ENCODE measurements at regions of chr17 and their contacts with region 1.

Region 1: DNA sequence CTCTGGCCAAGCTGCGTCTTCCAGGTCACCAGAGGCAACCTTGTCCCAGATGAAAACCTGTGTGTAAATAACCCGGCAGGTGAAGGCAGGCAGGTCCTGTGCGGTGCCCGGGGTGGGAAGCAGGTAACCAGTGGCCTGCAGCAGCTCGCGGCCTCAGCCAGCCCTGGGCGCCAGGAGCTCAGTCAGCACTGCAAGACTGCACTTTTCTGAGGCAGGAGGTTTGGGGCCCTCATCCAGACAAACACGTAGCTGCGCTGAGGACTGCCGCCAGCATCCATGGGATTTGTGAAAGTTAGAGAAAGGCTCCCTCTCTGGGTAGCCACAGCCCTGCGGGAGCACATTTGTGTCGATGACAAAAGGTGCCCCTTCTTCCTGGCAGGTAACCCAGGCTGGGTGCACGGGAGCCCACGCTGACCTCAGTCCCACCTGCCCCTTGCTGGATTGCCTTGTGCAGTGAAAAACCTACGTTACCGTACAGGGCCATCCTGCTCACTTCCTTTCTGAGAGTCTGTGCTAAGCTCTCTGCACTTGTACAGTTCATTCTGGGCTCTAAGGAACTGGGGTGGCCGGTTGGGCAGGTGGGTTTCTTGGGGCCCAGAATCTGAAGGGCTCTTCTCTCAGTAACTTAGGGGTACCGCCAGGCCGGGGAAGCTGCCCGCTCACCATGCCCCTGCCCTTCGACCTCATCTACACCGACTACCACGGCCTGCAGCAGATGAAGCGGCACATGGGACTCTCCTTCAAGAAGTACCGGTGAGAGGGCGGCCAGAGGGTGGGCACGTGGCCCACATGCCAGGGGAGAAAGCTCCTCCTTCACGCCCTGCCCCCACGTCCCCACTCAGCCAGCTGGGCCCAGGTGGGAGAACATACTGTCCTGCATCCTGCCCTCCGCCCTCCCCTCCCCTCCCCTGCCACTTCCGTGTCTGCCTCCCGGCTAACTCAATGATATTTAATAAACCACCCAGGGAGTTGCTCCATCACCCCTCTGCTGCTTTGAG is 56.4 kb downstream of the MGAT5B start:
- DNase-seq: no peak
- ATAC-seq: no peak
- H3K4me3 ChIP-seq: no peak overlapping the region
- H3K4me3 Mint-ChIP-seq: no peak overlapping the region
- H3K27ac ChIP-seq: no peak overlapping the region
- H3K27ac Mint-ChIP-seq: no peak overlapping the region
- H3K4me1 ChIP-seq: peaks cover 6% of the 10 kb centered on the region
- H3K4me1 Mint-ChIP-seq: no peaks in the 10 kb centered on the region
- H3K27me3 ChIP-seq: no peaks in the 10 kb centered on the region
- H3K27me3 Mint-ChIP-seq: no peaks in the 10 kb centered on the region
- CTCF ChIP-seq: no peak

Region 2: DNA sequence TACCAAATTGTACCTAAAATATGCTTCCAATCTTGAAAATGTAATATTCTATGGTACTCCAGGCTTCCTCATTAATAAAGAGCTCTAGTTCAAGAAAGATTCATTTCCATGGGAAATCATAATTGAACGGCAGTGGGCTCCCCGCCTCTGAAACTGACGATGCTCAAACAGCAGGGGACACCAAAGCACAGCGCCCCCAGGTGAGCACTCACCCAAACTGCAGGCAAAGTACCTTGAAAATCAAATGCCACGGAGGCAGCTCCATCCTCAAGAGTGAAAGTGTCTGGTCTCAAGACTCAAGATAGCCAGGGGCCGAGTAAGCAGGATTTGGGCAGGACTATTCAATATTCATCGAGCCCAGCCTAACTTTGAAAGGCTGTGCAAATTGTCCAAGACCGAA is 816.5 kb after region 1 on chr17:
- CTCF ChIA-PET with region 1: no interaction called
- POLR2A ChIA-PET with region 1: no interaction called
- intact Hi-C with region 1: loop called in 1 of 2 experiments (anchors 10 kb)
- DNase-seq: peak in 12 of 14 experiments; percentile 11 to 69 (median 28)
- ATAC-seq: peak; percentile 37
- H3K4me3 ChIP-seq: no peak overlapping the region
- H3K4me3 Mint-ChIP-seq: no peak overlapping the region
- H3K27ac ChIP-seq: no peak overlapping the region
- H3K27ac Mint-ChIP-seq: no peak overlapping the region
- H3K4me1 ChIP-seq: no peaks in the 10 kb centered on the region
- H3K4me1 Mint-ChIP-seq: no peaks in the 10 kb centered on the region
- H3K27me3 ChIP-seq: peaks cover 0 to 4% of the 10 kb centered on the region in 2 experiments
- H3K27me3 Mint-ChIP-seq: no peaks in the 10 kb centered on the region
- CTCF ChIP-seq: peak; percentile 60

Measured in CD4-positive, alpha-beta T cell (primary cell).